ENCODE measurements at regions of chr5 and their contacts with region 1.

Region 1: GRCh38 chr5:55037046-55037771 is 13.2 kb downstream of the GZMK start:
- DNase-seq: peak in 8 of 9 donors; percentile 10 to 69 (median 50)
- ATAC-seq: peak; percentile 89
- H3K4me3 ChIP-seq: no peak overlapping the region
- H3K4me3 Mint-ChIP-seq: peak overlapping the region; percentile 6 to 55 (median 48)
- H3K27ac ChIP-seq: peak overlapping the region; percentile 49
- H3K27ac Mint-ChIP-seq: peak overlapping the region; percentile 55 to 99 (median 86)
- H3K4me1 ChIP-seq: peaks cover 17 to 31% of the 10 kb centered on the region in 2 donors
- H3K4me1 Mint-ChIP-seq: peaks cover 11 to 53% (median 32%) of the 10 kb centered on the region in 7 donors
- H3K27me3 ChIP-seq: no peaks in the 10 kb centered on the region
- H3K27me3 Mint-ChIP-seq: no peaks in the 10 kb centered on the region

Region 2: GRCh38 chr5:55021410-55021809 is 15.8 kb before region 1 on chr5:
- CTCF ChIA-PET with region 1: interaction called, 6 read pairs
- POLR2A ChIA-PET with region 1: interaction called, 17 read pairs
- intact Hi-C with region 1: no loop called
- DNase-seq: no peak
- ATAC-seq: no peak
- H3K4me3 ChIP-seq: no peak overlapping the region
- H3K4me3 Mint-ChIP-seq: peak overlapping the region in 2 of 10 donors; percentile 19 to 30
- H3K27ac ChIP-seq: no peak overlapping the region
- H3K27ac Mint-ChIP-seq: peak overlapping the region in 1 of 9 donors; percentile 31
- H3K4me1 ChIP-seq: peaks cover 23 to 31% of the 10 kb centered on the region in 2 donors
- H3K4me1 Mint-ChIP-seq: peaks cover 18 to 51% (median 49%) of the 10 kb centered on the region in 7 donors
- H3K27me3 ChIP-seq: no peaks in the 10 kb centered on the region
- H3K27me3 Mint-ChIP-seq: no peaks in the 10 kb centered on the region

Region 3: DNA sequence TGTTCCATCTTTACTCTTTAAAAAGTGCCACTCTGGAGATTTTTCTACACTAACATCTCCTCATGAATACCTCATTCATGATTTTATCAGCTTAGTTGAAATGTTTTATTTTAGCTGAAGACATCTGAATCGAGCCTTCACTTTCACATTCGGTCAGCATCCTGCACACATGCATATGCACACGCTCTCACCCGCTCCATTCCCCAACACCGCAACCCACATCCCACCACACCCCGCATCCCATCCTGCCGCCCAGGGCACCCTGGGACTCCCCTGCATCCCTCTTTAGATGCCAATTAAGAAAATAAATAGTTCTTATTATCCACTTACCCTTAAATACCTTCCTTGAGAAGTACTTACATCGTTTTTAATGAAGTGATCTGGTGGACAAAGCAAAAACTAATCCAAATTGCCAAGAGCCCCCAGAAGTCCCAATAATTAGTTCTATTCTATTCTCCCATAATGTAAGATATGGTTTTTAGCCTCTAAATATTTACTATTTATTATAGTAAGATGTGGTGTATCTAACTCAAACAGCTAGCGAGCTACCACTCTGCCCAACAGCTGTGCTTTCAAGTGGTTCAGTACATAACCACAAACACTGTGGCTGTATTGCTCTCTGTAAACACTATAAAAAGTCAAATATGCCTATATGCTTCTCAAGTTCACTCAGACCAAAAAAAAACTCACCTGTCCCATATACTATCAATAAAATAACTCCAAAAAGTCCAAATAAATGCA is 25.0 kb after region 1 on chr5:
- CTCF ChIA-PET with region 1: no interaction called
- POLR2A ChIA-PET with region 1: interaction called, 16 read pairs
- intact Hi-C with region 1: loop called in 1 of 2 experiments (anchors 1 kb)
- DNase-seq: peak in 7 of 9 donors; percentile 25 to 71 (median 46)
- ATAC-seq: peak; percentile 81
- H3K4me3 ChIP-seq: peak overlapping the region; percentile 33
- H3K4me3 Mint-ChIP-seq: peak overlapping the region; percentile 43 to 94 (median 82)
- H3K27ac ChIP-seq: no peak overlapping the region
- H3K27ac Mint-ChIP-seq: peak overlapping the region; percentile 17 to 98 (median 62)
- H3K4me1 ChIP-seq: peaks cover 26 to 30% of the 10 kb centered on the region in 2 donors
- H3K4me1 Mint-ChIP-seq: peaks cover 28 to 80% (median 67%) of the 10 kb centered on the region in 7 donors
- H3K27me3 ChIP-seq: no peaks in the 10 kb centered on the region
- H3K27me3 Mint-ChIP-seq: peaks cover 0 to 7% (median 0%) of the 10 kb centered on the region in 5 donors

Region 4: DNA sequence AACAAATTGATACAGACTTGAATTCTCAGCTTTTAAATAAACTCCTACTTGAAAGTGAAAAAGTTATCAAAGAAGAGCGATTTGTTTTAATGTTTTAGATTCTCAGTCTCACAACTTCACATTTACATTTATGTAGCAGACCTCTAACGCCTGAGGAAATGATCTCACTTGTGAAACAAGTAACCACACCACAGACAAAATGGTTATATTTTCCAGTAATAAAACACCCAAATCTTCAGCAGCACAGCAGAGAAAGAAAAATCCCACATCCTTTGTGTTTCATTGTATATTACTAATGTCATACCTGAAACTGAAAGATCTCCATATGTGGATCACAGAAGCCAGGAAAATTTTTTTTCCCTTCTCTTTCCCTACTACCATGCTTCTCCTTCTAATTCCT is 35.5 kb after region 1 on chr5:
- CTCF ChIA-PET with region 1: interaction called, 5 read pairs
- POLR2A ChIA-PET with region 1: interaction called, 4 read pairs
- intact Hi-C with region 1: loop called (anchors 1 kb)
- DNase-seq: peak in 7 of 9 donors; percentile 48 to 81 (median 70)
- ATAC-seq: peak; percentile 90
- H3K4me3 ChIP-seq: peak overlapping the region; percentile 28
- H3K4me3 Mint-ChIP-seq: peak overlapping the region; percentile 22 to 77 (median 60)
- H3K27ac ChIP-seq: peak overlapping the region; percentile 40
- H3K27ac Mint-ChIP-seq: peak overlapping the region; percentile 47 to 95 (median 69)
- H3K4me1 ChIP-seq: peaks cover 27 to 35% of the 10 kb centered on the region in 2 donors
- H3K4me1 Mint-ChIP-seq: peaks cover 15 to 54% (median 43%) of the 10 kb centered on the region in 7 donors
- H3K27me3 ChIP-seq: no peaks in the 10 kb centered on the region
- H3K27me3 Mint-ChIP-seq: no peaks in the 10 kb centered on the region

Region 5: GRCh38 chr5:55146543-55147151 is 109.4 kb after region 1 on chr5:
- CTCF ChIA-PET with region 1: interaction called, 8 read pairs
- POLR2A ChIA-PET with region 1: interaction called, 4 read pairs
- intact Hi-C with region 1: loop called (anchors 1 to 5 kb)
- DNase-seq: peak; percentile 47 to 84 (median 77)
- ATAC-seq: peak; percentile 91
- H3K4me3 ChIP-seq: no peak overlapping the region
- H3K4me3 Mint-ChIP-seq: peak overlapping the region in 7 of 10 donors; percentile 21 to 74 (median 42)
- H3K27ac ChIP-seq: no peak overlapping the region
- H3K27ac Mint-ChIP-seq: peak overlapping the region in 6 of 9 donors; percentile 1 to 60 (median 27)
- H3K4me1 ChIP-seq: peaks cover 5 to 14% of the 10 kb centered on the region in 2 donors
- H3K4me1 Mint-ChIP-seq: peaks cover 12 to 38% (median 20%) of the 10 kb centered on the region in 7 donors
- H3K27me3 ChIP-seq: no peaks in the 10 kb centered on the region
- H3K27me3 Mint-ChIP-seq: peaks cover 0 to 62% (median 0%) of the 10 kb centered on the region in 5 donors

Measured in naive thymus-derived CD4-positive, alpha-beta T cell (primary cell).